BJ (cell line): ENCODE measurements at regions of chr1 and their contacts with region 1.

Region 1: DNA sequence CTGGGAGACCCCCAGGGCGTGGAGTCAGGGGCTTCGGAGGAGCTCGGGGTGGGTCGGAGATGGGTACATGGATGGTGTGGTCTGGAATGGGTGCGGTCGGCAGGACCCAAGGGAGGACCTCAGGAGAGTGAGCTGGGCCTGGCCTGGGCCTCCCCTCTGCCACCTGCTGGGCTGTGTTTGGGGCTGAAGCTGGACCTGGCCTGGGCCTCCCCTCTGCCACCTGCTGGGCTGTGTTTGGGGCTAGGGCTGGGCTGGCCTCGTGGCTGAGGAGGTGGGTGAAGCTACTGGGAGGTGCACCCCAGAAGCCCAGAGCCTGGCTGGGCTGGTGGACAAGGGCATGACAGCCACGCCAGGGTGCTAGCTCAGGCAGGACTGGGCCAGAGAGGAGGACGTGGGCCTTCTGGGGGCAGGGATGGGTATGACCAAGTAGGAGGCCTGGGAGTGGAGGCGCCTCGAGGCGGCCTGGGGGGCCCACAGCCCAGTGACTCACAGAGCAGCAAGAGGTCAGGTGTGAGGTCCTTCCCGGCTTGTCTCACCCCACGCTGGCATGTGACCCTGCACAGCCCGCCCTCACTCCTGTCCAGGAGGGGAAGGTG is 14.5 kb downstream of the SAMD11 start:
- DNase-seq: no peak
- H3K4me3 ChIP-seq: no peak overlapping the region
- H3K27me3 ChIP-seq: no peaks in the 10 kb centered on the region
- CTCF ChIP-seq: peak; percentile 70

Region 2: DNA sequence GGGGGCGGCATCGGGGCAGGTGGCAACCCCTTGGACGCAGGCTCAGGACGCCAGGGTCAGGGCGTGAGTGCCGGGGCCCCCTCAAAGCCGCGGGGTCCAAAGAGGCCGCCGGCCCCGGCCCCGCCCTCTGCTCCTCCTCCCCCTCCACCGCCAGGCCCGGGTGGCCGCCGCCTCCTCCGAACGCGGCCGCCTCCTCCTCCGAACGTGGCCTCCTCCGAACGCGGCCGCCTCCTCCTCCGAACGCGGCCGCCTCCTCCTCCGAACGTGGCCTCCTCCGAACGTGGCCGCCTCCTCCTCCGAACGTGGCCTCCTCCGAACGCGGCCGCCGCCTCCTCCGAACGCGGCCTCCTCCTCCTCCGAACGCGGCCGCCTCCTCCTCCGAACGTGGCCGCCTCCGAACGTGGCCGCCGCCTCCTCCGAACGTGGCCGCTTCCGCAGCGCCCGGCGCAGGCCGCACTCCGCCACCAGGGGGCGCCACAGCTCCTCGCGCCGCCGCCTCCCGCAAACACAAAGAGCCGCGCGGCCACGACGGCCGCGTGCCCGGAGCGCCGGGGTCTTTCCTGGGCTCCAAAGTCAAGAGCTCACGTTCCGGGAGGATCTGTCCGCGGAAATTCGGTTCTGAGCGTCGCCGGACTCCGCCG is 33.8 kb before region 1 on chr1:
- CTCF ChIA-PET with region 1: interaction called, 28 read pairs
- POLR2A ChIA-PET with region 1: no interaction called
- DNase-seq: no peak
- H3K4me3 ChIP-seq: peak overlapping the region; percentile 48
- H3K27me3 ChIP-seq: 0 out of 2 replicates have a peak, but pooled peaks cover 2% of the 10 kb centered on the region
- CTCF ChIP-seq: peak; percentile 44

Region 3: DNA sequence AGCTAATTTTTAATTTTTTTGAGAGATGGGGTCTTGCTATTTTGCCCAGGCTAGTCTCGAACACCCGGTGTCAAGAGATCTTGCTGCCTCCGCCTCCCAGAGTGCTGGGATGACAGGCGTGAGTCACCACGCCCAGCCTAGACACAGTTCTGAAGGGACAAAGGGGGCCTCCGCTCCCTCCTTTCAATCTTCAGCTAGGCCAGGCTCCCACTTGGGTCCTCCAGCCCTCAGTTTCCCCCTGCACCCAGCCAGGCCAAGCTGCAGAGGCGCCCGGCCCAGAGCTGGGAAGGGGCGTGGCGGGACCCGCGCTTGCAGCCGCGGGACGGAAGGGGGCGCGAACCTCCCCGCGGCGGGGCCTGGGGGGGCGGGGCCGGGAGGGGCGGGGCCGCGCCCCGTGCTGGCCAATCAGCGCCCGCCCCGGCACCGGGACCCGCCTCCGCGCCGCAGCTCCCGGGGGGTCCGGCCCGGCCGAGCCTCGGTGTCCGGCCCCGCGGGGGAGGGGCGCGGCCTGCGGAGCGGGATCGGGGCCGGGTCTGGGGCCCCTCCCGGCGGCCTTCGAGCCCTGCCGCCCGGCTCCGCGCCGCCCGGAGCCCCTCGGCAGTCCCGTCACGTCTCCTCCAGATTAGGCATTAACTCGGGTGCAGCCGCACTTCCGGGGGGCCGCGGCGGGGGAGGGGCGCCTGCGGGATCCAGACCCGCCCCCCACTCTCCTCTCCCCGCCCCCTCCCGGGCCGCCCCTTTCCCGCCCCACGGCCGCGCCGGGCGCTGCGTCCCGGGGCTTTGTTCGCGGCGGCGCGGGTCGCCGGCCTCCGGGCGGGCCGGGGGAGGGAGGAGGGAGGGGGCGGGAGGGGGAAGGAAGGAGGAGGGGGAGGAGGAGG is 81.2 kb after region 1 on chr1:
- CTCF ChIA-PET with region 1: no interaction called
- POLR2A ChIA-PET with region 1: no interaction called
- DNase-seq: no peak
- H3K4me3 ChIP-seq: peak overlapping the region; percentile 78
- H3K27me3 ChIP-seq: no peaks in the 10 kb centered on the region
- CTCF ChIP-seq: peak; percentile 53

Region 4: GRCh38 chr1:1144122-1144842 is 206.1 kb after region 1 on chr1:
- CTCF ChIA-PET with region 1: no interaction called
- POLR2A ChIA-PET with region 1: no interaction called
- DNase-seq: no peak
- H3K4me3 ChIP-seq: no peak overlapping the region
- H3K27me3 ChIP-seq: peaks cover 1% of the 10 kb centered on the region; the same call in 1 of the 2 replicates
- CTCF ChIP-seq: no peak

Region 5: GRCh38 chr1:1173793-1174415 is 235.7 kb after region 1 on chr1 and contains the start of gene TTLL10:
- CTCF ChIA-PET with region 1: no interaction called
- POLR2A ChIA-PET with region 1: no interaction called
- DNase-seq: no peak
- H3K4me3 ChIP-seq: no peak within 1 kb of the TSS
- H3K27me3 ChIP-seq: peaks cover 21% of the 10 kb centered on the region
- CTCF ChIP-seq: no peak
- polyA plus RNA-seq, gene TTLL10: not detected in 2 replicates